ENCODE measurements at regions of chr2 and their contacts with region 1.

Region 1: DNA sequence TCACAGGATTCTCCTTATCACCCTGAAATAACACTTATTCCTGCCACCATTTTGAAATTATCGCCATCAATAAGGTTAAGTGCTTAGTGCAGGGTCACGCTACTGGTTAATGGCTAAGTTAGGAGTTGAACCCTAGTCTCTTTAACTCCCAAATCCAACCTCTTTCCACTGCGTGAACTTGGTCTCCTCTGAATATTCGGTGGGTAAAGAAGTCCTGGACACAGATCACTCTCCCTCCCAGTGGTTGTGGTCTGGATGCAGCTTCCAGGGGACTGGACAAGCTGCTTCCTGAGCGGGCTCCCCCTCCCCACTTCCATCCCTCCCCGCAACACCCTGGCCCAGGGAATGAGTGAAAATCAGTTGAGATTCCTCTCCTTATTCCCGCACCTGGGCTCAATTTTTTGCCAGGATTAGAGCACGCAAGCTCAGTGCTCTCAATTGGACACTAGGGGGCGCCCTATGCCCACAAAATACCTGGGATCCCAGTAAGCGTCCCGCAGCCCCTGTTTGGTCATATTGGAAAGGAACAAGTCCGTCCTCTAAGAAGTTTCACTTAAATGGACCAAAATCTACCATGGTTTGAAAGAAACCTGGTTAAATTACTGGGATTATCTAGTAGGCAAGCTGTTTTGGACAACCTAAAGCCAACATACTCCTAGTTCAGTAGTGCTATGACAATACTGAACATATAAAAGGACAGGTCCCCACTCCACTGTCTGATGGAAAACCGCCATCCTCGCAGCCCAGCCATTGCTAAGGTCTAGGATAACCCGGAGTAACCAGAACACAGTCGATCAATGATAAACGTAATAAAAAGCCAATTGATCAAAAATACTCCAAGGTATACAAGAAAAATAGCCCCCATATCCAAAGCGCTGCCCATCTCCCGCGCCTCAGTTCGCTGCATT is 40.4 kb downstream of the DHRS9 start:
- DNase-seq: peak; percentile 18
- ATAC-seq: peak; percentile 70
- H3K4me3 Mint-ChIP-seq: no peak overlapping the region
- H3K27ac Mint-ChIP-seq: no peak overlapping the region
- H3K4me1 Mint-ChIP-seq: peaks cover 23% of the 10 kb centered on the region
- H3K27me3 Mint-ChIP-seq: no peaks in the 10 kb centered on the region
- CTCF ChIP-seq: no peak

Region 2: DNA sequence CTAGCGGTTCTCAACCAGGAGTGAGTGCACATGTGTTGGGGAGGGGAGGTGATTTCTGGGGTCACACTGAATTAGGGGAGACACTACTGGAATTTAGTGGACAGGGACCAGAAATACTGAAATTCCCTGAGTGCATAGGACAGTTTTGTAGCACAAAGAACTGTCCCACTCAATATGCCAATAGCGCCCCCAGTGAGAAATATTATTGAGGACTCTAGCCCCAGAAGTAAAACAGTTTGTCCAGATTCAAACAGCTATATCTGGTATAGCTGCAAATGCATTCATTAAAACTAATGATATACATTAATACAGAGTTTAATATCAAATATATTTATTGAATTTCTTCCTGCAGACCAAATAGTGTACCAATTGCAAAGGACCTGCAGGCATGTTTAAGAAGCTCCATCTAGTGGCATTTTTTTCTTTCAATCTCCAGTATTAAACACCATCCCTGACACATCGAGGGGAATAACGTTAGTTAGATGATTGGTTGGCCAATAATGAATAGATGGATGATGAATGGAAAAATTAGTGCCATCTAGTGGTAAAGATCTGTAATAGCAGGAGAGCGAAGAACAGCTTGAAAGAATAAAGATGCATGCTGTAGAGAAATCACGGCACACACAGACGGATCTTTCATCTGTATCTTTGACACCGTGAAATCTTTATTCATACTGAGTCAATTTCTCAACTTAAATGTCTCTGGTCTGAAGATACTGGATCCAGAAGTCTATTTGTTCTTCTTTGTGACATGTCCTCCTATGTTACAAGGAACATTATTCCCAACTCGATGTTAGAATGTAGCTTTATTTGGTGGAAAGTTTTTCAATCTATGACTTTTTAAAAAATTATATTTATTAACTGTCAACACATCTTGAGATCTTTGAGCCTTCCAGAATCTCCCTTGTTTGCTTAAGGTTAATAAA is 22.1 kb after region 1 on chr2:
- CTCF ChIA-PET with region 1: interaction called, 45 read pairs
- POLR2A ChIA-PET with region 1: no interaction called
- intact Hi-C with region 1: loop called (anchors 1 kb)
- DNase-seq: no peak
- ATAC-seq: peak; percentile 86
- H3K4me3 Mint-ChIP-seq: no peak overlapping the region
- H3K27ac Mint-ChIP-seq: no peak overlapping the region
- H3K4me1 Mint-ChIP-seq: no peaks in the 10 kb centered on the region
- H3K27me3 Mint-ChIP-seq: no peaks in the 10 kb centered on the region
- CTCF ChIP-seq: peak; percentile 52

Region 3: DNA sequence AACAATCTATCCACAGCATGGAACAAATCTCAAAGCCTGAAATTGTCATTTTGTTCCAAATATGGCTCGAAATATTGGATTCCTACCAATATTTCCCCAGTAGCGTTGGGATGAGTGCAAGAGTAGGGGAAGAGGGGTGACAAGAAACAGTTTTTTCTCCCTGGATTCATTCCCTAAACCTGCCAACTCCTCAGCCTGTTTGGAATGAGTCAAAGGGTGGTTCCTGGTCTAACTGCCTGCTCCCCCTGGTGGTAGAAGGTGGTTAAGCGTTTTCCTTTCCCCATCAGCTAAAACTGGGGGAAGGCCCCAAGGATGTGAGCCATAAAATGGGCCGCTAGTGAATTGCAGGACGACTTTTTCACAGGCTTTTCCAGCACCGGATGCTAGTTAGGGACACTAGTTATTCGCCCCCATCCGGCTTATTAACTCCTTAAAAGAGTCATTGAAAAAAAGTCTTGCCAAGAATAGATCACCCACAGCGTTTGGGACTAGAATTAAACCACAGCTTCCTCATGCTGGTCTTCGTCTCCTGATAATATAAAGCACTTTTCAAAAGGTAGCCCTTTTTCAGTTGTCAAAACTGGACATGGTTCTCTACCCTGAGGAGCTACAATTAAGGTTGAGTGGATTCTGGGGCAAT is 32.1 kb after region 1 on chr2:
- CTCF ChIA-PET with region 1: interaction called, 25 read pairs
- POLR2A ChIA-PET with region 1: no interaction called
- intact Hi-C with region 1: loop called (anchors 1 kb)
- DNase-seq: no peak
- ATAC-seq: peak; percentile 47
- H3K4me3 Mint-ChIP-seq: no peak overlapping the region
- H3K27ac Mint-ChIP-seq: no peak overlapping the region
- H3K4me1 Mint-ChIP-seq: peaks cover 3% of the 10 kb centered on the region
- H3K27me3 Mint-ChIP-seq: no peaks in the 10 kb centered on the region
- CTCF ChIP-seq: peak; percentile 54

Region 4: GRCh38 chr2:169528271-169528701 is 418.5 kb after region 1 on chr2:
- CTCF ChIA-PET with region 1: no interaction called
- POLR2A ChIA-PET with region 1: no interaction called
- intact Hi-C with region 1: loop called (anchors 5 kb)
- DNase-seq: peak; percentile 45
- ATAC-seq: peak; percentile 79
- H3K4me3 Mint-ChIP-seq: no peak overlapping the region
- H3K27ac Mint-ChIP-seq: no peak overlapping the region
- H3K4me1 Mint-ChIP-seq: no peaks in the 10 kb centered on the region
- H3K27me3 Mint-ChIP-seq: no peaks in the 10 kb centered on the region
- CTCF ChIP-seq: peak; percentile 94

Region 5: GRCh38 chr2:170530284-170530745 is 1420.6 kb after region 1 on chr2:
- CTCF ChIA-PET with region 1: no interaction called
- POLR2A ChIA-PET with region 1: no interaction called
- intact Hi-C with region 1: no loop called
- DNase-seq: no peak
- ATAC-seq: no peak
- H3K4me3 Mint-ChIP-seq: no peak overlapping the region
- H3K27ac Mint-ChIP-seq: no peak overlapping the region
- H3K4me1 Mint-ChIP-seq: no peaks in the 10 kb centered on the region
- H3K27me3 Mint-ChIP-seq: peaks cover 3% of the 10 kb centered on the region
- CTCF ChIP-seq: no peak